BJ (cell line): ENCODE measurements at regions of chr16 and their contacts with region 1.

Region 1: GRCh38 chr16:12067714-12068401 is 91.3 kb downstream of the SNX29 start:
- DNase-seq: no peak
- H3K4me3 ChIP-seq: no peak overlapping the region
- H3K27me3 ChIP-seq: no peaks in the 10 kb centered on the region
- CTCF ChIP-seq: peak; percentile 90

Region 2: GRCh38 chr16:11783319-11784037 is 284.4 kb before region 1 on chr16:
- CTCF ChIA-PET with region 1: no interaction called
- POLR2A ChIA-PET with region 1: no interaction called
- DNase-seq: no peak
- H3K4me3 ChIP-seq: peak overlapping the region; percentile 6; the same call in 1 of the 2 replicates
- H3K27me3 ChIP-seq: no peaks in the 10 kb centered on the region
- CTCF ChIP-seq: no peak

Region 3: GRCh38 chr16:11880007-11880406 is 187.9 kb before region 1 on chr16:
- CTCF ChIA-PET with region 1: interaction called, 3 read pairs
- POLR2A ChIA-PET with region 1: interaction called, 11 read pairs
- DNase-seq: no peak
- H3K4me3 ChIP-seq: no peak overlapping the region
- H3K27me3 ChIP-seq: no peaks in the 10 kb centered on the region
- CTCF ChIP-seq: no peak

Region 4: GRCh38 chr16:11949527-11949926 is 118.3 kb before region 1 on chr16:
- CTCF ChIA-PET with region 1: interaction called, 37 read pairs
- POLR2A ChIA-PET with region 1: no interaction called
- DNase-seq: no peak
- H3K4me3 ChIP-seq: no peak overlapping the region
- H3K27me3 ChIP-seq: no peaks in the 10 kb centered on the region
- CTCF ChIP-seq: peak; percentile 61

Region 5: GRCh38 chr16:11957591-11958395 is 110.1 kb before region 1 on chr16:
- CTCF ChIA-PET with region 1: interaction called, 13 read pairs
- POLR2A ChIA-PET with region 1: no interaction called
- DNase-seq: no peak
- H3K4me3 ChIP-seq: no peak overlapping the region
- H3K27me3 ChIP-seq: no peaks in the 10 kb centered on the region
- CTCF ChIP-seq: no peak

Region 6: DNA sequence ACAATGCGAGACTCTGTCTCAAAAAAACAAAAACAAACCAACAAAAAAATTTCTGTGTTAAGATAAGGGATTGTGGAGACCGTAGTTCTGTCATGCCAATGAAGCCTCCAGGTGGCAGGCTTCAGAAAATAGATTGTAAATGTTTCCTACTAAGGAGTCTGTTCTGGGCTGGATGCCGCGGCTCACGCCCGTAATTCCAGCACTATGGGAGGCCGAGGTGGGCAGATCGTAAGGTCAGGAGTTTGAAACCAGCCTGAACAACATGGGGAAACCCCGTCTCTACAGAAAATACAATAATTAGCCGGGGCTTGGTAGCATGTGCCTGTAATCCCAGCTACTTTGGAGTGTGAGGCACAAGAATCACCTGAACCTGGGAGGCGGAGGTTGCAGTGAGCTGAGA is 95.7 kb before region 1 on chr16:
- CTCF ChIA-PET with region 1: interaction called, 21 read pairs
- POLR2A ChIA-PET with region 1: no interaction called
- DNase-seq: no peak
- H3K4me3 ChIP-seq: no peak overlapping the region
- H3K27me3 ChIP-seq: no peaks in the 10 kb centered on the region
- CTCF ChIP-seq: no peak; the same call in 1 of the 2 replicates

Region 7: GRCh38 chr16:12050361-12050760 is 17.5 kb before region 1 on chr16:
- CTCF ChIA-PET with region 1: no interaction called
- POLR2A ChIA-PET with region 1: no interaction called
- DNase-seq: no peak
- H3K4me3 ChIP-seq: no peak overlapping the region
- H3K27me3 ChIP-seq: no peaks in the 10 kb centered on the region
- CTCF ChIP-seq: no peak

Region 8: DNA sequence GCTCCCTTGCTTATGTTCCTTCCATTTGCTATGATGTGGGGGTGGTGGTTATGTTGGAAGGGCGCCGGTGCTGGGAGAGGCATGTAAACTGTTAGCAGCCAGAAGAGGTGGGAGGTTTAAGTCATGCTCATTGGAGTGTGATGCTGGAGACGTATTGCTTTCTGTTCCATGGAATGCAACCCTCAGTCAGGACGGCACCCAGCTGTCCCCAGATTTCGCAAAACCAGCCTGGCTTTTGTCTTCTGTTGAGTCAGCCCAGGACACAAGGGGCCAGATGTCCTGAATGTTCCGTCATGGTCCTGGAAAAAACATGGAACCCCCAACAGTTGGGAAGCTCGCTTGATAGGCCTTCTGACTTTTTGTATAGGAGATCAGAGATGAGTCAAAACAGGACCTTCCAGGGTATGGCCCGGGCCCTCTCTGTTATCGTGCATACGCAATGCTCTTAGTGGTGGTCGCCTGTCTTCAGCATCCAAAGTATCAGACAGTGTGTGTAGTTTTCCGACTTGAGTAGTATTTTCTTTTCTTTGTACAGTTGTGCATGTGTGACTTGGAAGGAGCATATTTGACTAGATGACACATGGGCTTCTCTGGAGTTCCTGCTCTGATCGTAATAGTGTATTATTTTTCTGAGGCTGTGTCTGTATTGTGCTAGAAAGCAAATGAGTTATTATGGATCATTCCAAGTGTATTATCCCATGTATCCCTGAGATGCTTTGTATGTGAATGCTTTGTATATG is 110.6 kb after region 1 on chr16:
- CTCF ChIA-PET with region 1: no interaction called
- POLR2A ChIA-PET with region 1: no interaction called
- DNase-seq: no peak
- H3K4me3 ChIP-seq: no peak overlapping the region
- H3K27me3 ChIP-seq: no peaks in the 10 kb centered on the region
- CTCF ChIP-seq: no peak